ENCODE measurements at regions of chr15 and their contacts with region 1.

Region 1: DNA sequence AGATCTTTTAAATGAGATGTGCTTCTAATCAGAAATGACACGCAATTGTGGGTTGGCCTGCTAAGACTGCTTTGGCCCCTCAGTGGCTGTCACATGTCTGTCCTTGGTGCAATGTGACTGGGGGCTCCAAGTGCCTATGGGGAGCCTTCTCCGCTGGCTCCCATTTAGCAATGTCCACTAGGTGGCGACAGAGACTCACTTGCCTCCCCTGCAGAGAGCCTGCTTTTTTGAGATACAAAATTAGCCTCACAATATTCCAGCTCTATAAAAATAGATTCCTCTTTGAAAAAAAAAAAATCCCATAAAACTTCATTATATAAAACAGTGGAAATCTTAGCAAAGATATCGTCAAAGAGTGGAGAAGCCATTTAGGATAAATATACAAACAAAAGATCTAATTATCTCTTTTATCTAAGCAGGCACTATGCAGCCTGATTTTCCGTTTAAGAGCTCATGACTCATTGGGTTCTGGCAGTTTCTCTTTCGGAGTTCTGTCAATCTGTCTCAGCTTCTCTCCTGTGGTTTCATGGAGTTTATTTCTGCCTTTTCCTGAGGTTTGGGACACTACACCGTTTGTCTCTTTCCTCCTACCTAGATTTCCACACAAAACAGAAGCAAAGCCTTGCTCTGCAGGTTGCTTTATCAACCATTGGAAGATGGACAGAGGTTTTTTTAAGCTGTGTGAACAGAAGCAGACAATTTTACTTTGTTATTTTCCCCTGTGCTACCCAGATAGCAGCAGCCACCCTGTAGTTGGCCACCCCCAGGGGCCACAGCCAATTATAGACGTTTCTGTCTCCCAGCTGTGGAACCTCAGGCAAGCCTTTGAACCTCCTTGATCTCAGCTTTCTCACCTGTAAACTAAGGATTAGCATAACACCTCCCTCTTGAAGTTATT is 68.4 kb upstream of the TNFAIP8L3 start:
- DNase-seq: no peak
- H3K4me3 ChIP-seq: peak overlapping the region; percentile 39
- CTCF ChIP-seq: peak; percentile 85

Region 2: GRCh38 chr15:51132384-51133139 is 30.6 kb before region 1 on chr15:
- CTCF ChIA-PET with region 1: interaction called, 32 read pairs
- POLR2A ChIA-PET with region 1: interaction called, 3 read pairs
- DNase-seq: peak; percentile 95
- H3K4me3 ChIP-seq: no peak overlapping the region
- CTCF ChIP-seq: peak; percentile 94

Region 3: DNA sequence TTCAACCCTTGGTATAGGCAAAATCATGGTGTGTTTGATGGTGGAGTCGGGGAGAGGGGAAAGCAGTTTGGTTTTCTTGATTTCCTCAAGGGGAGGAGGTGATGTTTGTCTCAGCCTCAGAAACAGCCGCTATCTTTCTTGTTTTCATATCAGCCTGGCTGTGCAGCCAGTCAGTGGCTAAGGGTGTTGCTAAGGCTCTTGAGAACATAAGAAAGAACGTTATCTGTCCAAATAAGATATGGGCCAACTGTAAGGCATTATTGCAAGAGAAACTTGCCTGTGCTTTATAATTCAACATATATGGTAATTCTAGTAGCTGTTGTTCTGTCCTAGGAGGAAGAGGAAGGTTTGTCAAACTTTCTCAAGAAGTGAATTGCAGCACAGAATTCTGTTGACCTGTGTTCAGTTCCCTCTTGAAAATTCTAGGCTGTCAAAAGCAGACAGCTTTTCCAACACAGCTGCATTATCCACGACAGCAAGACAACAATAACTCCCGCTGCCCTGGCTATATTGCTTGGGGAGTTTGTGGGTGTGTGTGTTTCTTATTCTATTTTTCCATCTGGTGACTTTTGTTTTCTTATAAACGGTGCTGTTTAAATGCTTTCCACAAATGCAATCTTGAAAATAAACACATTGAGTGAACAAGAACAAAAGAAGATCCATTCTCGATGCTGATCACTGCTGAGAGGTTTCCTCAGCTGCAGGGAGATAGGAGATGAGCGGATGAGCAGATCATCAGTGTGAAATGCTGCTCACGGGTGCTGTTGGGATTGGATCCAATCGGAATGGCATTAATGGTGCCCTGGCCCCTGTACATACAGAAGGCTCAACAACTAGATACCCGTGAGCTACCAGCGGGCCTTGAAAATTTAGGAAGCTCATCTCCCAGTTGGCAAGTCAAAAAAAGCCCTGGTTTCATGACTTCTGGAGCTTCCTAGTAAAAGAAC is 22.4 kb after region 1 on chr15:
- CTCF ChIA-PET with region 1: interaction called, 63 read pairs
- POLR2A ChIA-PET with region 1: no interaction called
- DNase-seq: no peak
- H3K4me3 ChIP-seq: no peak overlapping the region
- CTCF ChIP-seq: no peak

Region 4: DNA sequence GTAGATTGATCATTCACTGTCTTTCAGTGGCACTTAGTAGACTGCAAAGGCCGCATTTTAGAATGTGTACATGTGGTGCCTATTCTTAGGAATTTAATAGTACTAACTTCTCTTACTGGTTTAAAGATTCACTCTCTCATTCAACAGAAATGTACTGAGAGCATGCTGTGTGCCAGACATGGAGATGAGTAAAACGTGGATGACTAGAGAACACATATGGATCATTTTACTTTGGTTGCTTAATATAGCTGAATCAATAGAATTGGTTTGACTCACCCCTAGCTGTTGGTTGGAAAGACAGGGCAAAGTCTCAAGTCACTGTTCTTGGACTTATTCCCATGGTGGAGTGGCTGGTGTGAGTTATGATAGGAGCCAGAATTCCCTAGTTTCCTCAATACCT is 40.7 kb after region 1 on chr15:
- CTCF ChIA-PET with region 1: interaction called, 63 read pairs
- POLR2A ChIA-PET with region 1: no interaction called
- DNase-seq: peak; percentile 55
- H3K4me3 ChIP-seq: no peak overlapping the region
- CTCF ChIP-seq: no peak

Region 5: GRCh38 chr15:51267703-51268083 is 104.6 kb after region 1 on chr15:
- CTCF ChIA-PET with region 1: interaction called, 23 read pairs
- POLR2A ChIA-PET with region 1: no interaction called
- DNase-seq: no peak
- H3K4me3 ChIP-seq: peak overlapping the region; percentile 55
- CTCF ChIP-seq: no peak

Region 6: GRCh38 chr15:51380999-51381795 is 218.1 kb after region 1 on chr15:
- CTCF ChIA-PET with region 1: interaction called, 220 read pairs
- POLR2A ChIA-PET with region 1: no interaction called
- DNase-seq: no peak
- H3K4me3 ChIP-seq: no peak overlapping the region
- CTCF ChIP-seq: peak; percentile 91

Measured in AG04449 (cell line).